GM12878 (cell line): ENCODE measurements at regions of chr1 and their contacts with region 1.

Region 1: DNA sequence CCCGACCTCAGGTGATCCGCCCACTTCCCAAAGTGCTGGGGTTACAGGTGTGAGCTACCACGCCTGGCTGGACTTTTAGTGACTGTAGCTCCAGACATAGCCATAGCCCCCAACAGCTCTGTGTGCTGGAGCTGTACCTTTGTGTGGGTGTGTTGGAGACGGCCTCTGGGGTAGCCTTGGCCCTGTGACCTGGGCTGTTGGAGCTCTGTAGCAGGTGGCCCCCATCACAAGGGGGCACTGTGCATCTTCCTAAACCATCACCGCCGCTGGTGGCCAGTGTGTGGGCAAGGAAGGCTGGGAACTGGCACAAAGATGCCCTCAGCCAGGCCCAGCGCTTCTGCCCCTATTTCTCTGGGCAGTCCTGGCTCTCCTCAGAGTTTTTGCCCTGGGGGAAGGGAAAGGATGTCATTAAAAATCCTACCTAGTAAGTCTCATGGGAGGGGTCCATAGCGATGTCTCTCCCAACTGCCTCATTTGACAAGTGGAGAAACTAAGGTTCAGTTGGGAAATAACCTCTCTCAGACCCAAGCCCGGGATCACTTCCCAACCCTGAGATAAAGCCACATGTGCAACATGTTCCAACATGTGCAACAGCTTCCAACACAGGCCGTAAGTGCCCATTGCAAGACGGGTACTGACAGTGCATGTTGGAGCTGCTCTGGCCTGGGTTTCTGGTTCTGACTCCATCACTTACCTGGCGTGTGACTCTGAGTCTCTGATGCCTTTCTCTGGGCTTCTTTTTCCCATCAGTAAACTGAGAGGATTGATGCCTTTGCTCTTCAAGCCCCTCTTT is 38.2 kb upstream of the FOXO6 start:
- DNase-seq: no peak
- ATAC-seq: peak; percentile 99
- H3K4me3 ChIP-seq: no peak overlapping the region
- H3K27ac ChIP-seq: no peak overlapping the region
- H3K4me1 ChIP-seq: peaks cover 4% of the 10 kb centered on the region
- H3K27me3 ChIP-seq: no peaks in the 10 kb centered on the region
- CTCF ChIP-seq: peak; percentile 71 to 92 (median 78)
- EP300 ChIP-seq: no peak
- POLR2A ChIP-seq: no peak
- RAD21 ChIP-seq: peak; percentile 74

Region 2: DNA sequence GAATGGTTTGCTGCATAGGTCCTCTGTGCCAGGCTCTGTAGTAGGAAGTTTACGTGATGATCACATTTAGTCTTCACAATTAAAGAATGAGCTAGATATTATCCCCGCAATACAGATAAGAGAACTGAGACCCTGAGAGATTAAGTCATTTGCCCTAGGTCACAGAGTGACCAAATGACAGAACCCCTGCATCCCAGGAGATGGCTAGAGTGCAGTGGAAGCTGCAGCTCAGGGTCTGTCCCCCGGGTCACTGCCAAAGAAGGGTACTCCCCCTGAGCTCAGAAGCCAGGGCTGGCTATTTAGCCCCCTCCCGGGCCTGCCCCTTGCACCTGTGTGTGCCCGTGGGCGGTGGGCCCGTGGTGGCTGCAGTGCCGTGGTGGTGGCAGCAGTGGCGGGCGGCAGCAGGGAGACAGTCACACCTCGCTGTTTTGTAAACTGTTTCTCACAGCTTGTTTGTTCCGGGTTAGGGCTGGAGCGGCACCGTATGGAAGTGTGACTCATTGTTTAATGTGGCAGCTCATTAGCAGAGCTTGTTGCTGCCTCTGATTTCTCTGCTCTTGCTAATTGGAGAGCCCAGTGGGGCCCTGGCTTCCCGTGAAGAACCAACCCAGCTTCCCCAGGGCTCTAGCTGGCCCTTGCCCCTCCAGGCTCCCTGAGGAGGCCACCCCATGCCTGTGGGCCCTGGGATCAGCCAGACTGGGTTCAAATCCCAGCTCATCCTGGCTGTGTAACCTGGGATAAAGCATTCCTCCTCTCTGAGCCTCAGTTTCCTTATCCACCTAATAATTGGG is 18.9 kb after region 1 on chr1:
- CTCF ChIA-PET with region 1: interaction called, 21 read pairs
- POLR2A ChIA-PET with region 1: no interaction called
- RAD21 ChIA-PET with region 1: interaction called, 6 read pairs
- SMC1A ChIA-PET with region 1: interaction called, 6 read pairs
- in situ Hi-C with region 1: no loop called
- intact Hi-C with region 1: no loop called
- DNase-seq: no peak
- ATAC-seq: no peak
- H3K4me3 ChIP-seq: no peak overlapping the region
- H3K27ac ChIP-seq: no peak overlapping the region
- H3K4me1 ChIP-seq: peaks cover 9% of the 10 kb centered on the region
- H3K27me3 ChIP-seq: no peaks in the 10 kb centered on the region
- CTCF ChIP-seq: no peak
- EP300 ChIP-seq: no peak
- POLR2A ChIP-seq: no peak
- RAD21 ChIP-seq: no peak

Region 3: GRCh38 chr1:41411229-41411628 is 88.2 kb after region 1 on chr1:
- CTCF ChIA-PET with region 1: interaction called, 261 read pairs
- POLR2A ChIA-PET with region 1: interaction called, 6 read pairs
- RAD21 ChIA-PET with region 1: interaction called, 132 read pairs
- SMC1A ChIA-PET with region 1: interaction called, 114 read pairs
- in situ Hi-C with region 1: loop called (anchors 5 kb)
- intact Hi-C with region 1: no loop called
- DNase-seq: no peak
- ATAC-seq: no peak
- H3K4me3 ChIP-seq: no peak overlapping the region
- H3K27ac ChIP-seq: no peak overlapping the region
- H3K4me1 ChIP-seq: no peaks in the 10 kb centered on the region
- H3K27me3 ChIP-seq: peaks cover 1 to 5% of the 10 kb centered on the region in 2 experiments; a peak in 3 of 4 replicates
- CTCF ChIP-seq: no peak
- EP300 ChIP-seq: no peak
- POLR2A ChIP-seq: no peak
- RAD21 ChIP-seq: no peak

Region 4: DNA sequence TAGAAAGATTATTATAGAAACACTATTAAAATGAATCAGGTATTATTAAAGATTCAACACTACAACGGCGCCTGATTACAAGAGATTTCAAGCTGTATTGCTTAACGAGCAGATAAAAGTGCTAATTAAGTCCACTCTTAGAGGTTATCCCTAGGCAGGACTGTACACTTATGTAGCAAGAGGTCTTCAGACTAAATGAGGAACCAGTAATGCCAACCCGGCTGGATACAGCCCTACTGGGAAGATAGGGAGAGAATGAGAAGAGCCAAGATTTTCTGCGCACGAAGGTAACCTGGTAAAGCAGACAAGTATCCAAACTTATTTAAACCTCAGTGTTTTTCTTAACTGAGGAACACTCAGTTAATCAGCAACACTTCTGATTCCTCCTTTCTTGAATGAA is 711.4 kb after region 1 on chr1:
- CTCF ChIA-PET with region 1: no interaction called
- POLR2A ChIA-PET with region 1: no interaction called
- RAD21 ChIA-PET with region 1: no interaction called
- SMC1A ChIA-PET with region 1: no interaction called
- in situ Hi-C with region 1: no loop called
- intact Hi-C with region 1: no loop called
- DNase-seq: no peak
- ATAC-seq: no peak
- H3K4me3 ChIP-seq: peak overlapping the region; percentile 90
- H3K27ac ChIP-seq: peak overlapping the region; percentile 3; the same call in 1 of the 2 replicates
- H3K4me1 ChIP-seq: peaks cover 8% of the 10 kb centered on the region; the same call in 1 of the 2 replicates
- H3K27me3 ChIP-seq: no peaks in the 10 kb centered on the region; a peak in 1 of 4 replicates
- CTCF ChIP-seq: no peak
- EP300 ChIP-seq: no peak
- POLR2A ChIP-seq: no peak
- RAD21 ChIP-seq: no peak